B cell (primary cell): ENCODE measurements at regions of chr19 and their contacts with region 1.

Region 1: GRCh38 chr19:4400135-4400936 is at the start of gene SH3GL1:
- DNase-seq: peak; percentile 96
- ATAC-seq: peak; percentile 68
- H3K4me3 ChIP-seq: peak within 1 kb of the TSS; percentile 85 to 99 (median 88)
- H3K4me3 Mint-ChIP-seq: peak within 1 kb of the TSS; percentile 85
- H3K27ac ChIP-seq: peak within 1 kb of the TSS; percentile 49 to 97
- H3K27ac Mint-ChIP-seq: peak within 1 kb of the TSS; percentile 88
- H3K4me1 ChIP-seq: peaks cover 29 to 44% of the 10 kb centered on the region in 2 donors
- H3K4me1 Mint-ChIP-seq: peaks cover 53% of the 10 kb centered on the region
- H3K27me3 ChIP-seq: no peaks in the 10 kb centered on the region
- H3K27me3 Mint-ChIP-seq: no peaks in the 10 kb centered on the region
- CTCF ChIP-seq: peak; percentile 77
- total RNA-seq, gene SH3GL1: 37.2 and 41.9 TPM in 2 replicates

Region 2: DNA sequence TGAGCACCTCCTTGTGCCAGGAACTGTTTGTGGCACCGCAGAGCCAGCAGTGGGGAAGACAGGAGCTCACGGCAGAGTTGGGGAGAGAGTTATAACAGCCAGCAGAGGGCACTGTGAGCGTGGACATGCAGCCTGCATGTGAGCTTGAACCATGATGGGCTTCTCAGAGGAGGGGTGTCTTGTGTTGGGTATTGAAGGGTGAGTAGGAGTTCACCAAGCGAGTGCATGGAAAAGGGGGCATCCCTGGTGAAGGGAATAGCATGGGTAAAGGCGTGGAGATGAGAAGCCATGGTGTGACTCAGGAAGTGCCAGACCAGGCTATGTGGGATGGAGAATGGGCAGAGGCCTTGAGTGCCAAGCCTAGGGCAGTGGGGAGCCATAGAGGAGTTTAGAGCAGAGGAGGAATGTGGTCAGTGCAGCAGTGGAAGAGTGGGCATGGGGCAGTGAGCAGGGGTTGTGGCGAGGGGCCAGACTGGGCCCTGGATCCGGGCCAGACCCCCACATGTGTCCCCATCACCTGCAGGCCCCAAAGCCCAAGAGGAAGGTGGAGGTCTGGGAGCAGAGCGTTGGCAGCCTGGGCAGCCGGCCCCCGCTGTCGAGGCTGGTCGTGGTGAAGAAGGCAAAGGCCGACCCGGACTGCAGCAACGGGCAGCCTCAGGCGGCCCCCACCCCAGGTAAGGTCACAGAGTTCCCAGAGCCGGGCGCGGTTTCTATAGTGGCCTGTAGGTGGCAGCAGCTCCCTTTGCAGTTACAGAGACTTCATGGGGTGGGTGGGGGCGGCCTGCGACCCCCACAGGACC is 133.0 kb before region 1 on chr19:
- CTCF ChIA-PET with region 1: interaction called, 5 read pairs
- POLR2A ChIA-PET with region 1: interaction called, 3 read pairs
- intact Hi-C with region 1: loop called (anchors 1 kb)
- DNase-seq: peak; percentile 70
- ATAC-seq: peak; percentile 79
- H3K4me3 ChIP-seq: no peak overlapping the region
- H3K4me3 Mint-ChIP-seq: no peak overlapping the region
- H3K27ac ChIP-seq: no peak overlapping the region
- H3K27ac Mint-ChIP-seq: peak overlapping the region; percentile 37
- H3K4me1 ChIP-seq: peaks cover 0 to 11% of the 10 kb centered on the region in 2 donors
- H3K4me1 Mint-ChIP-seq: peaks cover 12% of the 10 kb centered on the region
- H3K27me3 ChIP-seq: no peaks in the 10 kb centered on the region
- H3K27me3 Mint-ChIP-seq: no peaks in the 10 kb centered on the region
- CTCF ChIP-seq: peak; percentile 84

Region 3: DNA sequence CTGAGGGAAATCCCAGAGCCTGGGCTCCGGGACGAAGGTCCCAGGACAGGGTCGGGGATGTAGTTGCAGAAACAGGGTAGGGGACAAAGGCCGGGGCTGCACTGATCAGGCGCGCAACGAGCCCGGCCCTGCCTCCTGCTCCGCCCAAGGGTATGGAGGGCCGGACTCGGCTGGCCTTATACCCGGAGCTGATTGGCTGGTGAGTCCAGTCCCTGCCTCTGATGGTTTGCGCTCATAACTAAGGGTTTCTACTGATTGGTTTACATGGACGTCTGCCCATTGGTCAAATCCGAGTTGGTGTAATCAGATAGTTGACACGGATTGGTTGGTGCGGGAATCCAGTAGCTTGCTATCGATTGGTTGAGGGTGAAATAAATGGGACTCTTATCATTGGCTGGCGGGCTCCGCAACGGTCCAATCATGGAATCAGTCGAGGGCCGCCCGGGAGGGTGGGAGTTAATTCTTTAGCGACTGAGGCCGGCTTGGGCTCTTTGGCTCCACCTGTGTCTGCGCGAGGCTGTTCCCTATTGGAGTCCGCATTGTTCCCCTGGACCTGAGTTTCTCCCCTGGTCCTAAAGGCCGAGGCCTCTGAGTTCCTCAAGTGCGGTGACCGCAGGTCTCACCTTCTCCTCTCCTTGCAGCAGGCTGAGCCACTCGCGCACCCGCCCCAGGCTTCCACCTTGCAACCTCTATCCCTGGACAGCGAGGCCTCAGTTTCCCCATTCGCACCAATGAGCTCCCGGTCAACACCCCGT is 57.5 kb before region 1 on chr19:
- CTCF ChIA-PET with region 1: interaction called, 20 read pairs
- POLR2A ChIA-PET with region 1: interaction called, 9 read pairs
- intact Hi-C with region 1: loop called (anchors 1 kb)
- DNase-seq: peak; percentile 97
- ATAC-seq: peak; percentile 85
- H3K4me3 ChIP-seq: peak overlapping the region; percentile 63 to 89 (median 81)
- H3K4me3 Mint-ChIP-seq: peak overlapping the region; percentile 90
- H3K27ac ChIP-seq: peak overlapping the region; percentile 64 to 82
- H3K27ac Mint-ChIP-seq: peak overlapping the region; percentile 69
- H3K4me1 ChIP-seq: peaks cover 10 to 32% of the 10 kb centered on the region in 2 donors
- H3K4me1 Mint-ChIP-seq: peaks cover 27% of the 10 kb centered on the region
- H3K27me3 ChIP-seq: no peaks in the 10 kb centered on the region
- H3K27me3 Mint-ChIP-seq: no peaks in the 10 kb centered on the region
- CTCF ChIP-seq: no peak

Region 4: DNA sequence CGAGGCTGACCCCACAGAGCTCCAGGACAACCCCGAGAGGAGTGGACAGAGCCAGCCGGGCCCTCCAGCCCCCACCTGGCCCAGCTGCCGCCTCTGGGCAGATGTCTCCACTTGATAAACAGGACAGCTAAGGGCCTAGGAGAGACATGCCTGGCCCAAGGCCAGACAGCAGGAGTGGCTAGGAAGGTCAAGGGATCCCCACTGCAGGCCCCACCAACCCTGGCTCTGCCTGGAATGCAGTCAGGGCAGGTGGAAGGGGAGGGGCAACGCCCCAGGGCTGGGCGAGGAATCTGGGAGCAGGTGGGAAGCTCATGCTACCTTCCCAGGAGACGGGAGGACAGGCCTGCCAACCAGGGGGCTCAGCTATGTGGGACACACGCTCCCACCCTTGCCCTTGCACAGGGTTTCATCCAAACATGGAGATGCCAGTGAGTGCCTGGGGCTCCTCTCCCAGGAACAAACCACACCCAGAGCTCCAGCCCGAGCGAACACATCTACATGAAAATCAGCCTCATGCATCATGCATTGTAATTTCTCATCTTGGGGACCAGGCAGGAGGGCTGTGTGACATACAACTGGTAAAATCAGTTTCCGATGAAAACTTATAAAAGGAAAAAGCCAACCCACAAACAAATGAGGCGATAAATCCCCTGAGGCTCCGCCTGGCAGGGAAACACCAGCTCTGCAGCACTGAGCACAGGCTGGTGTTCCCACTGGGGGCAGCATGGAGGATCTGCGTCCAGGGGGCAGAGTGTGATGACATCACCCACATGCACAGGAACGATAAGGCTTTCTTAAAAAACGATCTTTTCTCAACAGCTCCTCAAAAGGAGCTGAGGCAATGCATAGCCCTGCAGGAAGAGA is 24.9 kb before region 1 on chr19:
- CTCF ChIA-PET with region 1: interaction called, 29 read pairs
- POLR2A ChIA-PET with region 1: interaction called, 6 read pairs
- intact Hi-C with region 1: loop called (anchors 1 kb)
- DNase-seq: peak; percentile 85
- ATAC-seq: peak; percentile 70
- H3K4me3 ChIP-seq: peak overlapping the region in 3 of 5 experiments; percentile 38 to 56 (median 39)
- H3K4me3 Mint-ChIP-seq: peak overlapping the region; percentile 84
- H3K27ac ChIP-seq: peak overlapping the region; percentile 58 to 63
- H3K27ac Mint-ChIP-seq: peak overlapping the region; percentile 87
- H3K4me1 ChIP-seq: peaks cover 100% of the 10 kb centered on the region in 2 donors
- H3K4me1 Mint-ChIP-seq: peaks cover 88% of the 10 kb centered on the region
- H3K27me3 ChIP-seq: no peaks in the 10 kb centered on the region
- H3K27me3 Mint-ChIP-seq: no peaks in the 10 kb centered on the region
- CTCF ChIP-seq: peak; percentile 63

Region 5: DNA sequence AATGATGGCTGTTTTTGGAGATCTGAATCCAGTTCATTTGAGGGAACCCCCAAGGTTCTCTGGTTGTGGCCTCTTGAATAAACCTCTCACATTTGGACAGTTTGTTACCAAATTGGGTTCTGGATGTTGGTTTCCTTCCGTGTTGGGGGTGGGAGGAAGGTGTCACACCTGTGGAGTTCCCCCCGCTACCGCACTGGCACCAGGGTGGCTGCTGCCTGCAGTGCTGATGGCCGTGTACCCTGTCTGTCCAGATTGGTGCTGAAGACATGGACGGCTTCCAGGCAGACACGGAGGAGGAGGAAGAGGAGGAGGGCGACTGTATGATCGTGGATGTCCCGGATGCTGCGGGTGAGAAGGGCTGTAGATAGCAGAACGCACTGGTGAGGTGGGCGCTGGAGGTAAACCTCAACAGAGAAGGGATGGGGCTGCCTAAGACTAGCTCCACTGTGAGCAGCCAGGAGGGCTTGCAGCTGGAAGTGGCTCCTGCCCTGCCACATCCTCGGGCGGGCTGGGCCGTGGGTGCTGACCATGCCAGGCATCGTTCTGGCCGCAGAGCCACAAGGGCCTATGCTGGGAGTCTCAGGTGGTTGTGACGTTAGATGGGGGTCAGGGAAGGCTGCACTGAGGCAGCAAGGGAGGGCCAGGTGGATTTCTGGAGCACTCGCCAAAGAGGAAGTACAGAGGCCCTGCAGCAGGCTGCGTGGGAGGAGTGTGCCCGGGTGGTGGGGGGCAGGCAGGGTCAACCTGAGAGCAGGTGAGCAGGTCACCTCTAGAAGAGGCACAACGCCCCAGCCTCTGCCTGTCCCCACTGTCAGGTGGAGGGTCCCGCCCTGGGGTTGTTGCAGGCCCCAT is 41.9 kb after region 1 on chr19:
- CTCF ChIA-PET with region 1: no interaction called
- POLR2A ChIA-PET with region 1: no interaction called
- intact Hi-C with region 1: no loop called
- DNase-seq: peak; percentile 41
- ATAC-seq: peak; percentile 49
- H3K4me3 ChIP-seq: peak overlapping the region in 1 of 5 experiments; percentile 26
- H3K4me3 Mint-ChIP-seq: peak overlapping the region; percentile 70
- H3K27ac ChIP-seq: peak overlapping the region; percentile 7 to 60
- H3K27ac Mint-ChIP-seq: peak overlapping the region; percentile 82
- H3K4me1 ChIP-seq: peaks cover 8 to 13% of the 10 kb centered on the region in 2 donors
- H3K4me1 Mint-ChIP-seq: peaks cover 14% of the 10 kb centered on the region
- H3K27me3 ChIP-seq: no peaks in the 10 kb centered on the region
- H3K27me3 Mint-ChIP-seq: no peaks in the 10 kb centered on the region
- CTCF ChIP-seq: no peak